Tibial artery (tissue), 4 donors: ENCODE measurements at regions of chr21 and their contacts with region 1.

Region 1: GRCh38 chr21:14259747-14260146 is 43.8 kb downstream of the RBM11 start:
- DNase-seq: no peak
- H3K4me3 ChIP-seq: no peak overlapping the region
- H3K27ac ChIP-seq: no peak overlapping the region
- H3K4me1 ChIP-seq: no peaks in the 10 kb centered on the region
- H3K27me3 ChIP-seq: peaks cover 0 to 2% of the 10 kb centered on the region in 2 donors
- CTCF ChIP-seq: peak; percentile 50 to 53

Region 2: DNA sequence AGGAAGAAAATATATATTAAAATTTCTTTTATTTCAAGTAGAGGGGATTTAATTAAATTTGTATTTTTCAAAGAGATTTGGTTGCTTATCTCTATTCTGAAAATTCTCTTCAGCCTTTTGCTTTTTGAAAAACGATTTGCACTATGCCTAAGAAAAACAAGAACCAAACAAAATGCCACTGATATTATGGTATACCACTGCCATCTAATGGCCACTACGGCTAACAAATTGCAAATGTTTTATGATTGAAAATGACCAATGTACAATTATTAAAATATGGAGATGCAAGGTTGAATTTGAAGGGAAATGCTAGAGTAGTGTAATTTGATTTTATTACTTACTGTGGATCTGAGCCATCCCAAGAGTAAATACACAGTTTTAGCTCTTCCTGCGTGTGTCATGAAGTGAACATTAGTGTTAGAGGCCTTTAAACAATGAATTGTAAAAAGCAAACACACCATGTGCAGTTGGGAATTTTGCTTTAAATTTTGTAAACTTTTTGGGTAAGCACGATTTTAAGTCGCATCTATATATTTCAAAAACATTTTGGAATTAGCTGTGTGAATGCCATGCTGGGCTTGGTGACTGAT is 1332.6 kb after region 1 on chr21:
- intact Hi-C with region 1: loop called (anchors 5 kb)
- DNase-seq: no peak
- H3K4me3 ChIP-seq: no peak overlapping the region
- H3K27ac ChIP-seq: no peak overlapping the region
- H3K4me1 ChIP-seq: no peaks in the 10 kb centered on the region
- H3K27me3 ChIP-seq: no peaks in the 10 kb centered on the region
- CTCF ChIP-seq: peak; percentile 38 to 44